ENCODE measurements at regions of chr16 and their contacts with region 1.

Region 1: GRCh38 chr16:1330260-1330914 is 3.1 kb upstream of the BAIAP3 start:
- DNase-seq: no peak
- H3K4me3 ChIP-seq: no peak overlapping the region
- H3K27ac ChIP-seq: no peak overlapping the region
- H3K4me1 ChIP-seq: peaks cover 11% of the 10 kb centered on the region
- H3K27me3 ChIP-seq: peaks cover 41% of the 10 kb centered on the region
- CTCF ChIP-seq: peak; percentile 60

Region 2: GRCh38 chr16:303760-304505 is 1026.5 kb before region 1 on chr16:
- CTCF ChIA-PET with region 1: no interaction called
- POLR2A ChIA-PET with region 1: no interaction called
- intact Hi-C with region 1: no loop called
- DNase-seq: no peak
- H3K4me3 ChIP-seq: no peak overlapping the region
- H3K27ac ChIP-seq: no peak overlapping the region
- H3K4me1 ChIP-seq: no peaks in the 10 kb centered on the region
- H3K27me3 ChIP-seq: no peaks in the 10 kb centered on the region
- CTCF ChIP-seq: no peak

Region 3: DNA sequence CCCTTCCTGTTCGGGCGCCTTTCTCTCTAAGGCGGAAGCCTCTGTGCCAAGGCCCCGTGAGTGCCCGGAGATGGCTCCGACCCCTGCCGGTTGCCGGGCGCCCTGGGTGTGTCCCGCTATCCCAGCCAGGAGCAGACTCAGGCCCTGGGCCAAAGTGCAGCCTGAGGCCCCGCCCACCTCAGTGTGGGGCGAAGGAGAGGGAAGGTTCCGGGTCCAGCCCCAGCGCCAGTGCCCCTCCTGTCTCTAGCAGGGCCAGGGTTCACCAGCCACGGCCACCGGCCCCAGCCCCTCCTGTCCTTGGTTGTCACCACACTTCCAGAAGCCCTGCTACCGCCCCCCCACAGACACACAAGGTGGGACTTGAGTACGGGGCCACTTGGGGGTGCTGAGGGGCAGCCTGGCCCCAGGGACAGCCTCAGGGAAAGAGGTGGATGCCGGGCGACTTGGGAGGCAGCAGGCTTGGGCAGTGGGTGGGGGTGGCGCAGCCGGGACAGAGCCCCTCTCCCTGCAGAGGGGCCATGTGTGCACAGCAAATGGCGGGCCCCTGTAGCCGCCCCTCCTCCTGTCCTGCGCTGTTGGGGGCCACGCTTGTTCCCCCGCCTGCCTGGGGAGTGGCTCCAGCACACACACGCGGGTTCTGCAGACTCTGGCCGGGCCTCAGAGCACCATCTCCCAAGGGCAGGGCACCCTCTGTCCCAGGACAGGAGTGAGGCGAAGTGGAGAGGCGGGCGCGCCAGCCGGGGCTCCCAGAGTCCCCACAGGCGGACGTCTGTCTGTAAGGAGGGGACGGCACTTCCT is 240.4 kb before region 1 on chr16:
- CTCF ChIA-PET with region 1: no interaction called
- POLR2A ChIA-PET with region 1: no interaction called
- intact Hi-C with region 1: no loop called
- DNase-seq: no peak
- H3K4me3 ChIP-seq: peak overlapping the region; percentile 19
- H3K27ac ChIP-seq: no peak overlapping the region
- H3K4me1 ChIP-seq: no peaks in the 10 kb centered on the region
- H3K27me3 ChIP-seq: peaks cover 9% of the 10 kb centered on the region
- CTCF ChIP-seq: no peak

Region 4: GRCh38 chr16:1119766-1120576 is 210.4 kb before region 1 on chr16:
- CTCF ChIA-PET with region 1: interaction called, 12 read pairs
- POLR2A ChIA-PET with region 1: no interaction called
- intact Hi-C with region 1: no loop called
- DNase-seq: no peak
- H3K4me3 ChIP-seq: no peak overlapping the region
- H3K27ac ChIP-seq: no peak overlapping the region
- H3K4me1 ChIP-seq: no peaks in the 10 kb centered on the region
- H3K27me3 ChIP-seq: no peaks in the 10 kb centered on the region
- CTCF ChIP-seq: no peak

Region 5: DNA sequence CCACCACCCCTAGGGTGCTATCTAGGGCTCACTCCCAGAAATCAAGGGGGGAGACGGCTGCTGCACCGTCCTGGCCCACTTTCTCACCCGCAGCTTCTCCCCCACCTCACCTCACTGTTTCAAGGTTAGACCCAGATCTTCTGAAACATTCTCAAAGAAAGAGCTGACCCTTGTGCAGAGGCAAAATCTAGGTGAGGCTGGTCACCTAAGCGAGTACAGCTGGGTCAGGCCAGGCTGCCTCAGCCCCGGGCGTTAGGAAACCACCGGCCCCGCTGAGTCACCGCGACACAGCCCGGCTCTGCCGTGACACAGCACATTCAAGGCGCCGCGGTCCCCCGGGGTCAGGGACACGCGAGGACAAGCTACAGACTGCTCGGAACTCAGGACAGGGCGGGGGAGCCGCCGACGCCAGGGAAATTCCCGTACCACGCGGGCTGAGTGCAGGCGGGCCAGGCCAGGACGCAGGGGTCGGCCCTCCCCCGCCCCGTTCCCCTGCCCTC is 48.5 kb after region 1 on chr16:
- CTCF ChIA-PET with region 1: no interaction called
- POLR2A ChIA-PET with region 1: no interaction called
- intact Hi-C with region 1: no loop called
- DNase-seq: peak; percentile 54
- H3K4me3 ChIP-seq: peak overlapping the region; percentile 90
- H3K27ac ChIP-seq: peak overlapping the region; percentile 97
- H3K4me1 ChIP-seq: peaks cover 16% of the 10 kb centered on the region
- H3K27me3 ChIP-seq: no peaks in the 10 kb centered on the region
- CTCF ChIP-seq: no peak

Region 6: DNA sequence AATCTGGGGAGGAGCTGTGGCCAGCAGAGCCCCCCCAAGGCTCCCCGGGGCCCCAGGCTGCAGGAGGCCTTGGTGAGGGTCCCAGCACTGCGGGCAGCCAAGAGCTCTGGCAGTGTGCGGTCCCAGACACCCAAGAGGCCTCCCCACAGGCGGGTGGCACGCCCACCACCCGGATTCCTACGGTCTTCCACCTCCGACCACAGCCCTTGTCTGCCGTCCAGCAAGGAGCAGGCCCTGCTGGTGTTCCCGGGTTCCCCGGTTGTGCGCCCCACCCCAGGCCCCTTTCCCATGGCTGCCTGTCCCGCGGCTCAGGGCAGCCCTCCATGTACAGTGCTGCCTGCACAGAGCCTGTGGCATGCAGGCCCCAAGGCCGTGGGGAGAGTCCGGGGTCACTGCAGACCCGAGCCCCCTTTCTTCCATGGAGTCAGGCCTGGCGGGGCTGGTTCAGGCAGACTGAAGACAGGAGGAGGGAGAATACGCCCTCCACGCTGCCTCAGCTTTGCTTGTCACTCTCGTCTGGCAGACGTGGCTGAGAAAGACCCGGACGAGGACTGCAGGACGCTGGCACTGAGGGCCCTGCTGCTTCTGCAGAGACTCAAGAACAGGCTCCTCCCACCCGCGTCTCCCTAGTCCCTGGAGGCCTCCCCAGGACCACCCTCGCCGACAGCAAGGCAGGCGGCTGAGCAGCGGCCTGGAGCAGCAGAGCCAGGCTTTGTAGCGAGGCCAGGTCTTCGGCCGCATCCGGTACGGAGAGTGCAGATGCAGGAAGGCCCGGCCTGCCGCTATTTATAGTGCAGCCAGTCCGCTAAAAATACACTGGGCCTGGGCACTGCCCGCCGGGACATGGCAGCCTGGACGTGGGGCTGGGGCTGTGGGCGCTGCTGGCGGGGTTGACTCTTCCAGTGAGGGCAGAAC is 179.2 kb after region 1 on chr16:
- CTCF ChIA-PET with region 1: no interaction called
- POLR2A ChIA-PET with region 1: no interaction called
- intact Hi-C with region 1: no loop called
- DNase-seq: no peak
- H3K4me3 ChIP-seq: no peak overlapping the region
- H3K27ac ChIP-seq: no peak overlapping the region
- H3K4me1 ChIP-seq: no peaks in the 10 kb centered on the region
- H3K27me3 ChIP-seq: no peaks in the 10 kb centered on the region
- CTCF ChIP-seq: no peak

Measured in A673 (cell line).